ENCODE measurements at regions of chr2 and their contacts with region 1.

Region 1: GRCh38 chr2:71117063-71117462 is 13.0 kb downstream of the MCEE start:
- DNase-seq: no peak
- H3K4me3 ChIP-seq: no peak overlapping the region
- H3K27ac ChIP-seq: no peak overlapping the region
- H3K4me1 ChIP-seq: no peaks in the 10 kb centered on the region
- H3K27me3 ChIP-seq: no peaks in the 10 kb centered on the region

Region 2: GRCh38 chr2:71100195-71100964 is 16.7 kb before region 1 on chr2:
- CTCF ChIA-PET with region 1: interaction called, 12 read pairs
- POLR2A ChIA-PET with region 1: no interaction called
- DNase-seq: peak; percentile 56 to 68 (median 60)
- H3K4me3 ChIP-seq: no peak overlapping the region
- H3K27ac ChIP-seq: no peak overlapping the region
- H3K4me1 ChIP-seq: peaks cover 0 to 11% (median 6%) of the 10 kb centered on the region in 4 experiments
- H3K27me3 ChIP-seq: no peaks in the 10 kb centered on the region

Measured in common myeloid progenitor, CD34-positive (primary cell).